Activated CD4-positive, alpha-beta T cell treated with anti-CD3 and anti-CD28 coated beads for 36 hours (primary cell): ENCODE measurements at regions of chr12 and their contacts with region 1.

Region 1: DNA sequence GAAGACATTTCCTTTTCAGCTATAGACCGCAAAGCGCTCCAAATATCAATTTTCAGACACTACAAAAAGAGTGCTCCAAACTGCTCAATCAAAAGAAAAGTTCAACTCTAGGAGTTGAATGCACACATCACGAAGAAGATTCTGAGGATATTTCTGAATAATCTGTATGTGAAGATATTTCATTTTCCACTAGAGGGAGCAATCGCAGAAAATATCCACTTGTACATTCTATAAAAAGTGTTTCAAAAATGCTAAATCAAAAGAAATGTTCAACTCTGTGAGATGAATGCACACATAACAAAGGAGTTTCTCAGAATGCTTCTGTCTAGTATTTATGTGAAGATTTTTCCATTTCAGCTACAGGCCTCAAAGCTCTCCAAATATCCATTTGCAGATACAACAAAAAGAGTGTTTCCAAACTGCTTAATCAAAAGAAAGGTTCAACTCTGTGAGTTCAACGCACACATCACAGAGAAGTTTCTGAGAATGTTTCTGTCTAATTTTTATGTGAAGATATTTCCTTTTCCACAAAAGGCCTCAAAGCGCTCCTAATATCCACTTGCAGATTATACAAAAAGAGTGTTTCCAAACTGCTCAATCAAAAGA is 643.8 kb upstream of the ALG10B start:
- DNase-seq: no peak
- ATAC-seq: no peak
- H3K4me3 Mint-ChIP-seq: no peak overlapping the region
- H3K27ac Mint-ChIP-seq: no peak overlapping the region
- H3K4me1 Mint-ChIP-seq: no peaks in the 10 kb centered on the region
- H3K27me3 Mint-ChIP-seq: no peaks in the 10 kb centered on the region

Region 2: DNA sequence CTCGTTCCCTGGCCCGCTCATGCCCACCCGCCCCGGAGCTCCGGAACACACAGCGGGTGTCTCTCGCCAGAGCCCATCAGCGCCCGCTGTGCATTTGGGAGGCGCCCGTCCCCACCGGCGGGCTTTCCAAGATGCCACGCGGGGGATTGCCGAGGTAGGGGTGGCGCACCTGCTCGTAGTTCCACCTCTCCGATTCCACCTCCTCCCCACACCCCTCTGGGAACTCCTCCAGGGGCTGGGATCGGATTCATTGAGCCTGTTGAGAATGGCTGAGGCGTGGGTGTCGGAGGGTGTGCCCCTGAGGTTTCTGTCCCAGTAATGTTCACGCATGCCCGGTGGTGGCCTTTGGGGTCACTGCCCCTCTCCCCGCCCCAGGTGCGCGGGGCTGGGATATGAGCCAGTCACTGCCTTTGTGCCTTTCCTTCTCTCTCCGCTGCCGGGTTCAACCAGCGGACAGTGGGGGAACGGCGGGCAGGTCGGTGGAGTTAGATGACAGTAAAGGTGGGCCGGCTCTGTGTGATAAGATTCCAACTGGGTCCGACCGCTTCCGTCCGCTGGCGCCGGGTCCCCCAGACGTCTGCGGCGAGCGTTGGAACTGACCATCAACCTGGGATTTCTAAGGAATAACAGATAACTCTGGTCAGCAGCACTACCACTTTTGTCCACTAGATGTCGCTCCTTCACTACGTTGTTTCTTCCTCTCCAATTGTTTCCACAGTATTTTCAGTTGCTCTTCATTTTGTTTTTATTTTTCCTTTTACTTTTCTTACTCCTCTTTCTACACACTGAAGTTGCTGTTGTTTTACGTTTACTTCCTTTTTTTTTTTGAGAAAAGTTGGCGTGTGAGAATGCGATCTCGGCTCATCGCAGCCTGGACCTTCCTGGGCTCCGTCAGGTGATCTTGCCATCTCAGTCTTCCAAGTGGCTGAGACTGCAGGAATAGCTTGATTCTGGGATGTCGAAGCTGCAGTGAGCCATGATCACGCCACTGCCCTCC is 465.8 kb after region 1 on chr12:
- CTCF ChIA-PET with region 1: no interaction called
- POLR2A ChIA-PET with region 1: no interaction called
- intact Hi-C with region 1: loop called in 1 of 2 experiments (anchors 5 kb)
- DNase-seq: peak; percentile 76
- ATAC-seq: peak; percentile 66
- H3K4me3 Mint-ChIP-seq: peak overlapping the region; percentile 61
- H3K27ac Mint-ChIP-seq: peak overlapping the region; percentile 27
- H3K4me1 Mint-ChIP-seq: peaks cover 6% of the 10 kb centered on the region
- H3K27me3 Mint-ChIP-seq: peaks cover 10% of the 10 kb centered on the region

Region 3: DNA sequence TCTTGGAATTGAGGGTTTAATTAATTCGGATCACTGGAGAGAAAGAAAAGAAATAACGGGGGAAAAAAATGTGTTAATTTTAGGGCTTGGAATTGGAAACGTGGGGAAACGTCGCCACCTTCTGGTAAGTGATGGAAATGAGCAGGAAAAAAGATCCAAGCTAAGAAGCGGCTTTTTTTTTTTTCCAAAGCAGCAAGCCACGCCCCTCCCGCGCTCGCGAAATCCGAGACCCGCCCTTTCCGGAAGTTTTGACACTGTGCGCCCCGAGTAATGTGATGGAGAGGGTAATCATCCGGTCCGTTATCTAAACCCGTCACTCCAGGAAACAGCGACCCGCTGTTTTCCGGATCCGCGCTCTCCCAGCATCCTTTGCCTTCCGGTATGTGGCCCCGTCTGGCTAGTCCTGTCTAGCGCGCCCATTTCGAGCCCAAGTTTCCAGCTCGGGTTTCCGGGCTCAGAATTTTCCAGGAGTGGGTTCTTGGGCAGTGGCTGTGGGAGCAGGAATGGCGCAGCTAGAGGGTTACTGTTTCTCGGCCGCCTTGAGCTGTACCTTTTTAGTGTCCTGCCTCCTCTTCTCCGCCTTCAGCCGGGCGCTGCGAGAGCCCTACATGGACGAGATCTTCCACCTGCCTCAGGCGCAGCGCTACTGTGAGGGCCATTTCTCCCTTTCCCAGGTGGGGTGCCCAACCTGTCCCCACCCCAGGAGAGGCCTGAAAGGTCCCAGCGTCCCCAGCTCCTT is 643.8 kb after region 1 on chr12 and contains the start of gene ALG10B:
- CTCF ChIA-PET with region 1: no interaction called
- POLR2A ChIA-PET with region 1: no interaction called
- intact Hi-C with region 1: loop called (anchors 2 to 10 kb)
- DNase-seq: peak; percentile 94
- ATAC-seq: peak; percentile 100
- H3K4me3 Mint-ChIP-seq: peak within 1 kb of the TSS; percentile 89
- H3K27ac Mint-ChIP-seq: peak within 1 kb of the TSS; percentile 95
- H3K4me1 Mint-ChIP-seq: peaks cover 20% of the 10 kb centered on the region
- H3K27me3 Mint-ChIP-seq: no peaks in the 10 kb centered on the region
- total RNA-seq, gene ALG10B: 14.2 to 15.3 TPM

Region 4: DNA sequence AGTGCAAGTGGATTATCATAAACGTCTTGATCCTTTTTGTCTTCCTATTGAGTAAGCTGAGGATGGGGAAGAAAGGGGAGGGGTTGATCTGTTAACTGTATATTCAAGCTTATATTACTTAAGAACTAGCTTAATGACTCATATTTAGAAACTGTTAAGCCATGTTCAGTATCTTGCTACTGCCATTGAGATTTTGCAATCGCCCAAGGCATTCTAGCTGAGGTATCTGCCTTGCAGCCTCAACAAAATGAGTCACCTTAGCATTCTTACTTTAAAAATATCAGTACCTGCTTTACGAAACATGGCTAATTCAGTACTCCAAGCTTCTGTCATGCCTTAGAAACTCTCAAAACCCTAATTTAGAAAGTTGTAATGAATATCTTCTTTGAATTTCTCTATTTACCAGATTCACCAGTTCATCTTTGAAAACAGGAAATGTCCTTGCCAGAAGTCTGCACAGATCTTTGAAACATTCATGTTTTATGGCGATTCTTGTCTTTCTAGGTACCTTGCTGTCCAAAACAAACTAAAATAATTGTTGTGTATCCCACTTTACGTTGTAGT is 719.9 kb after region 1 on chr12:
- CTCF ChIA-PET with region 1: no interaction called
- POLR2A ChIA-PET with region 1: no interaction called
- intact Hi-C with region 1: no loop called
- DNase-seq: no peak
- ATAC-seq: no peak
- H3K4me3 Mint-ChIP-seq: no peak overlapping the region
- H3K27ac Mint-ChIP-seq: no peak overlapping the region
- H3K4me1 Mint-ChIP-seq: no peaks in the 10 kb centered on the region
- H3K27me3 Mint-ChIP-seq: no peaks in the 10 kb centered on the region

Region 5: DNA sequence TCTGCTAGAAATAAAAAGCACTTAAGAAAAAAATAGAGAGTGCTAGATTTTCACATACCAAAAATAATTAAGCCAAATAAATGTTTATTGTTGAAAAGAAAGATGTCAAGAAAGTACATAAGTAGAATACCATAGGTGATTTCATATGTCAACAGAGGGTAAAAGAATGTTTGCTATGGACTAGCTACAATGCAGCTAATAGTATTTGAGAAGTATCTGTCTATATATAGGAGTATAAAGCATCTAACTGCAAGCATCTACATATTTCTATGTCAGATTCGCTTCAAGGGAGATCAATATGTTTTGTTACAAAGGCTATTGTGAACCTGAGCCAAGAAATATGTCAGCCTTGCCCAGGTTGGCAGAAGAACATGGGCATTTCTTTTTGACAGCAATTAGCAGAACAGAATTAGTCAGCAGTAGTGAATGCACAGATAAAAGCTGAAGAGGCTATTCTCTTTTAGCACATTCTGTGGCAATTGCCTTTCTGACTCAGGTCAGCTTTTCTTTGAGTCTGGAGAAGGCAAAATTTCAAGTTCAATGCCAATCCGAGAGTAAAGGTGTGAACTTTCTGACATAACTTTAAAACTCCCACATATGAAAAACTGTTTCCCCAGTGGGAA is 783.9 kb after region 1 on chr12:
- CTCF ChIA-PET with region 1: no interaction called
- POLR2A ChIA-PET with region 1: no interaction called
- intact Hi-C with region 1: no loop called
- DNase-seq: no peak
- ATAC-seq: no peak
- H3K4me3 Mint-ChIP-seq: no peak overlapping the region
- H3K27ac Mint-ChIP-seq: no peak overlapping the region
- H3K4me1 Mint-ChIP-seq: no peaks in the 10 kb centered on the region
- H3K27me3 Mint-ChIP-seq: no peaks in the 10 kb centered on the region